Right ventricle myocardium inferior (tissue), 1 donor: ENCODE measurements at regions of chr12 and their contacts with region 1.

Region 1: GRCh38 chr12:48125985-48126384 is 6.8 kb downstream of the PFKM start:
- DNase-seq: no peak
- ATAC-seq: peak; percentile 92

Region 2: GRCh38 chr12:48145981-48146380 is 20.0 kb after region 1 on chr12:
- intact Hi-C with region 1: loop called (anchors 2 kb)
- DNase-seq: no peak
- ATAC-seq: peak; percentile 86